ENCODE measurements at regions of chrX and their contacts with region 1.

Region 1: DNA sequence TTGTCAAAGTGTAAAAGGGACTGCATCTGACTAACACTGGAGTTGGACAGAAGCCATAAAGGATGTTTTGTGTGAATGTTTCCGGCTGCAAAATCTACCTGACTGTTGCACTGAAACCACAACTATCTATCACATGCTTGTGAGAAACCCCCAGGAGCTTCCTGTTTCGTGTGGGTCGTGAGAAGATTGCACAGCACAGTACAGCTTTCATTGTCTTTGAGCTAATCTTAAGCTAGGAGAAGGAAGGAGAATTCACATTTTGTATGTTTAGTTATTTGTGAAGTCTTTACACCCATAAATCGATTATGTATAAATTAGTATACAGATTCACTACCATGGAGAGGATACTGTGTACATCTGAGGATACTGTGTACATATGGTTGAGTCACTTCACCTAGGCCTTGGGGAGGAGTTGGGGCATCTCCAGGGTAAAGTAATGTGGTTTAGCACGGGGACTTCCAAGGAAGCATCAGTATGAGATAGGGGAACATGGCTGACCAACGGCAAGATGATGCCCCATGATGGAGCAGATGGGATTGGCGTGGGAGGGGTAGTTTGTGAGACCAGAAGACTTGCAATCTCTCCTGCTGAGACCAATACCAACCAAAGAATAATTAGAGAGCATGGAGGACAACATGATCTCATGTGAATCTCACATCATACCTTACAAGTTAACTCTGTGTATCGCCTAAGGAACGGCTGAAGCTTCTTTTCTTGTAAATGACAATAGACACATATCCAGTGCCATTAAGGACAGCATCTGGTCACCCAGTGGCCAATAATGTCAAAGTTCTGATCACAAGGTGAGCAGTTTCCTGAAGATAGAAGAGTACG is 43.1 kb upstream of the FAM9C start:
- DNase-seq: peak; percentile 74
- H3K4me3 Mint-ChIP-seq: peak overlapping the region; percentile 79
- H3K27ac Mint-ChIP-seq: peak overlapping the region; percentile 97
- H3K4me1 Mint-ChIP-seq: peaks cover 87% of the 10 kb centered on the region
- H3K27me3 Mint-ChIP-seq: no peaks in the 10 kb centered on the region

Region 2: DNA sequence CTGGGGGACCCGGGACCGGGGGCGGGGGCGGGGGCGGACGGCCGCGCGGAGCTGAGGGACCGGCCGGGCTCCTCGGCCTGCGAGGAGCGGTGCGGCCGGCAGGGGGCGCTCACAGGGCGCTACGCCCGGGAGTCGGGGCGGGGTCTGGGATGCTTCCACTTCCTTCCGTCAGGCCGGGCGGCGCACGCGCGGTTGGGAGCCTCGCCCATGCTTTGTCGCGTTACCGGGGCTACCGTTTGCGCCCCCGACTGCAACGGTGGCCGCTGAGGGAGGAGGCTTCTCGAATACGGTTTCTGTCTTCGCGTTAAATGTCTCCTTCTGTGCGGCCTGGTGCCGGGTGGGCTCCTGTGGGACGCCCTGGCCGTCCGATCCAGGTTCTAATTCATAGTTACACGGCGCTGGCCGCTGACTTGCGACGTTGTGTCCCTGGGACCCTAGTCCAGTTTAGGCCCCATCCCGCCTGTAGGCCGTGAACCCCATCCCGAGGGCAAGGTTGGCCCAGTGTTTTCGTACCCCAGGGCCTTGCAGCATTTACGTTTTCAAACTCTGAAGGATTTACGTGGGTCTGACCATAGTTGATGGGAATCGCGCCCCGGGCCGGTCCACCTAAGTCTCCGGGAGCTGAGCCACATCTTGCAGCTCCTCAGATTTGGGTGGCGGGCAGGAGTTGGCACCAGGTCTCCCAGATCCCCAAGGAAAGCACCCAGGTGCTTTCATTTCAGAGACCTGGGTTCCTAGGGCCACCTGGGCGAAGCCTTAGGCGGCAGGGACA is 1329.0 kb before region 1 on chrX:
- CTCF ChIA-PET with region 1: no interaction called
- intact Hi-C with region 1: loop called (anchors 2 kb)
- DNase-seq: peak; percentile 89
- H3K4me3 Mint-ChIP-seq: peak overlapping the region; percentile 94
- H3K27ac Mint-ChIP-seq: peak overlapping the region; percentile 100
- H3K4me1 Mint-ChIP-seq: peaks cover 20% of the 10 kb centered on the region
- H3K27me3 Mint-ChIP-seq: no peaks in the 10 kb centered on the region

Region 3: DNA sequence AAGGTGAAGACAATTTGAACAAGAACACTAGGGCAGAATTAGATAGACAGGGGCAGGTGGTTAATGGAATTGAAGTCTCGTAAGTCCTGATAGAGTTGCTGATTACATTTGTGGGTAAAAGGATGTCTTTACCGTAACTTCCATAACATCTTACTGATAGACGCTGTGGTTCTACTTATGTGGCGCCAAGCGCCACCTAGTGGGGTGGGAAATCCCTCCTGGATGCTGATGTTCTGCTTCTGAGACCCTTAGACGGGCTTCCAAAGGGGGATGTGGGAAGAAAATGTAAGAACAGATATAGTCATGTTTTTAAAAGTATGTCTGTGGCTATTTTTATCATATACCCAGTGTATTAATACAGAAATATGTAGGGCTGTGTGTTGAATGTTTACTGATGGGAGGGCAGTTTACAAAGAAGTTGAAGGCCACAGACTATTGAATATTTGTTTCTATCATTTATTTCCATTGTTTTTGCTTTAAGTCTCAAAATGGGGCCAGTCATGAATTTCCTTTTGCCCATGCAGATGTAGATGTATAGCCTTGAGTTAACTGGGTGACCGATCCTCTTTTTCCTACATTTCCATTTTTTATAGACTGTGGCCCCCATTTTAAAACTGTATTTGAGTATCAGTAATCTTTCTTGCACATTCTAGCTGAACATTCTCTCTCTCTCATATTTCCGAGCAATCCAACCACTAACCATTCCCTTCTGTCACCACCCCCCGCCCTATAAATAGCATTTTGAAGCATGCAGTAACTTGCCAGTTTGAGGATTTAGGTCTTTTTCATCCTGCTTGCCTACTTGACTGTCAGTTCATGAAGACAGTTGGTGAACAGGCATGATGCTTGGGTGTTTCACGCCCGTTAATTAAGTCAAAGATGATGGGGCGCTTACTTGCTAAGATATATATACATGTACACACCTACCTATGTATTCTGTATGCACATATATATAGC is 193.2 kb before region 1 on chrX:
- CTCF ChIA-PET with region 1: no interaction called
- intact Hi-C with region 1: no loop called
- DNase-seq: peak; percentile 59
- H3K4me3 Mint-ChIP-seq: no peak overlapping the region
- H3K27ac Mint-ChIP-seq: no peak overlapping the region
- H3K4me1 Mint-ChIP-seq: peaks cover 31% of the 10 kb centered on the region
- H3K27me3 Mint-ChIP-seq: no peaks in the 10 kb centered on the region

Region 4: DNA sequence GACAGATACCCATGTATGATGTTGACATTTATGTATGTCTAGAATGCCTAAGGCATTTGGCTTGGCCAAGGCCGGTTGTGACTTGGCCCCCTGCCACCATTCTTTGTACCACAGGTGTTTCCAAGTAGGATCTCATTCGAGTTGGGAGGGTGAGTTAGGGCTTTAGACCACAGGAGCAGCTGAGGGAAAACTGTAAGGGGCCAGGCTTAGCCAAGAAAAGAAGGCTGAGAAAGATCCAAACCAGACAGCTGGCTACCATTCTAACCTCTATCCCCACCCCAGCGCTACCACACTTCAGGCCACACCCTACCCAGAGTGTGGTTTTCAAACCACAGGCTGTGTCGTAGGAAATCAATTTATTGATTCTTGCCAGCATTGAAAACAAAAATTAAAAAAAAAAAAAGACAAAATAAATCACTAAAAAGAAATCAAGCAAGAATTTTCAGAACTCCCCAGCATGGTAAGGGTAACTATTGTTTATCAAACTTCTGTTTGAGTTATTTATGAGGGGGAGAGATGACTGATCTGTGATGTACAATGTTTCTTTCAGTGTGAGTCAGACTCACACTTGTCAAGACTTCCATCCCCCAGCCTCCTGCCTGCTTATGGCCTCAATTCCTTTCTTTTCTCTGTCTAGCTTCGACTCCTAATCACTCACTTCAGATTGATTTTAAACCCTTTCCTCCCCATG is 102.8 kb before region 1 on chrX:
- CTCF ChIA-PET with region 1: interaction called, 28 read pairs
- intact Hi-C with region 1: loop called (anchors 1 kb)
- DNase-seq: peak; percentile 54
- H3K4me3 Mint-ChIP-seq: peak overlapping the region; percentile 54
- H3K27ac Mint-ChIP-seq: peak overlapping the region; percentile 95
- H3K4me1 Mint-ChIP-seq: peaks cover 77% of the 10 kb centered on the region
- H3K27me3 Mint-ChIP-seq: no peaks in the 10 kb centered on the region

Region 5: GRCh38 chrX:13077168-13077567 is 10.4 kb before region 1 on chrX:
- CTCF ChIA-PET with region 1: interaction called, 5 read pairs
- intact Hi-C with region 1: loop called (anchors 1 kb)
- DNase-seq: peak; percentile 69
- H3K4me3 Mint-ChIP-seq: no peak overlapping the region
- H3K27ac Mint-ChIP-seq: peak overlapping the region; percentile 80
- H3K4me1 Mint-ChIP-seq: peaks cover 72% of the 10 kb centered on the region
- H3K27me3 Mint-ChIP-seq: no peaks in the 10 kb centered on the region

Region 6: DNA sequence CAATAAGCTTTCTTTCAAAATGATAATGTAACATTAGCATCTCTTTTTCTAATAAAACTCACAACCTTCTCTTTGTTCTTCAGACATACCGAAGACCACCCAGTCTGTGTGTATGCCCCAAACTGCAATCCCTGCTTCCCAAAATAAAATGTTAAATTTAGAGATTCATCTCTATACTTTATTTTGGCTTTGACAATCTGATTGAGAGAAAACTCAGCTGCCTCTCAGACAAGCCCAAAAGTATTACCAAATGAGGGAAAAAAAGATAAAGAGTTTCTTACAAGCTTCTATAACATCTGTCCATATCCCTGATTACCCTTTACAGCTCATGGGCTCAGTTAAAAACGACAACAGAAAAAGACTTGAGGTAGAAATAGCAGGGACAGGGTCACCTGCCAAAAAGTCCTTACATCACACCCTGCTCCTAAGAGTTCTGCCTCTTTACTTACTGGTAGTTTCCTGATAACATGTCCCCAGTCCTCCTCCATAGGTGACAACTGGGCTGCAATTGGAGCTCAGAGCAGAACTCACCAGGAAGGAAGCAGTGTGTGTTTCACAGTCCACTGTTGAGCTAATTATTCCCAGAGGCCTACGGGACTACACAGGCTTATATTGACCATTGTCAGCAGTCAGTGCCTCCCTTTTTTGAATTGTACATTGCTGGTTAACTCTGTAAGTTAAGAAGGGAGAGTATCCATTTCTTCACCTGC is 27.8 kb after region 1 on chrX:
- CTCF ChIA-PET with region 1: no interaction called
- intact Hi-C with region 1: no loop called
- DNase-seq: no peak
- H3K4me3 Mint-ChIP-seq: no peak overlapping the region
- H3K27ac Mint-ChIP-seq: no peak overlapping the region
- H3K4me1 Mint-ChIP-seq: no peaks in the 10 kb centered on the region
- H3K27me3 Mint-ChIP-seq: no peaks in the 10 kb centered on the region

Region 7: DNA sequence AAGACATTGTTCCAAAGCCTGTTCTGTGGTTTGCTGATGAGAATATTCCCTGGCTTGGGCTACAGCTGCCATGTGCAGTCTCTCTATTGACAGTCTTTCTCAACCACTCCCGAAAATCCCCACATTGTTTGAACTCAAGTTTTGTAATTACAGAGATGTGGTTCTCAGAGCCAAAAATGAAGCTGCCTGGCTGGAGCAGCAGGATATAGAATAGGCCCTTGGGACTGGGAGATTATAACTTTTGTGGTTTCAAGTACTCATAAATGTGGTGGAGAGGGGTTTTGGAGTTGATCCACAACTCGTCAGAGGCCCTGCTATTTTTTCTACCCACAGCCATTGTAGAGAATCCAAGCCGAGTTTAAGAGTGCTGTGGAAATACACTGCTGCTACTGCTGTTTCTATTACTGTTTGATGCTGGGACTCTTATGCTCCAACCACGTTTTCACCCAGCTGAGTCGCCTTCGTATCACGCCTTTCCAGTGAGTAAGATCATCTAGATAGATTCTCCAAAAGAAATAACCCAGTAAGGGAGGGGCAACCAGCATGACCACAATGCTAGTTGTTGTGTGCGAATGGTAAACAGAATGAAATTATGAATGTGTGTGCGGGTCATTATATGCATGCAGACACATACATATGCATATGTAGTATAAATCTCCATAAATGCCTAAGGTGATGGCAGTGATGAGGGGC is 289.5 kb after region 1 on chrX:
- CTCF ChIA-PET with region 1: no interaction called
- intact Hi-C with region 1: loop called (anchors 2 kb)
- DNase-seq: peak; percentile 24
- H3K4me3 Mint-ChIP-seq: no peak overlapping the region
- H3K27ac Mint-ChIP-seq: no peak overlapping the region
- H3K4me1 Mint-ChIP-seq: peaks cover 25% of the 10 kb centered on the region
- H3K27me3 Mint-ChIP-seq: no peaks in the 10 kb centered on the region

Region 8: DNA sequence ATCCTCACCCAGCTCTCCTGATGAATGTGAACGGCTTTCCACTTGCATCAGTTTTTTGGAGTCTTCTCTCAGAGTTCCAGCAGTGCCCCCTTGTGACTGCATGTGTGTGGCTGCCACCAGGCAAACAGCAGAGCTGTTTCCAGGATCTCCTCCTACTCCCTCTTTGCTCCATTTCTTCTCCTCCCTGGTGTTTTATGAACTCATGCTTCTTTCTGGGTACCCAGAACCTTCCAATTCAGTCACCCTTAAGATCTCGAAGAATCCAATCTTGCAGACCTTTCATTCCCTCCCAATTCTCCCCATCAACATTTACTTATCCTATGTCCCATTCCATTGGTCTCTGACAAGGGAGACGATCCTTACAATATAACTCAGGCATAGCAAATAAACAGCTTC is 558.6 kb after region 1 on chrX:
- CTCF ChIA-PET with region 1: no interaction called
- intact Hi-C with region 1: loop called (anchors 2 kb)
- DNase-seq: peak; percentile 73
- H3K4me3 Mint-ChIP-seq: no peak overlapping the region
- H3K27ac Mint-ChIP-seq: peak overlapping the region; percentile 18
- H3K4me1 Mint-ChIP-seq: peaks cover 12% of the 10 kb centered on the region
- H3K27me3 Mint-ChIP-seq: no peaks in the 10 kb centered on the region

Measured in activated naive CD4-positive, alpha-beta T cell treated with anti-CD3 and anti-CD28 coated beads for 36 hours (primary cell).